ENCODE measurements at regions of chr10 and their contacts with region 1.

Region 1: DNA sequence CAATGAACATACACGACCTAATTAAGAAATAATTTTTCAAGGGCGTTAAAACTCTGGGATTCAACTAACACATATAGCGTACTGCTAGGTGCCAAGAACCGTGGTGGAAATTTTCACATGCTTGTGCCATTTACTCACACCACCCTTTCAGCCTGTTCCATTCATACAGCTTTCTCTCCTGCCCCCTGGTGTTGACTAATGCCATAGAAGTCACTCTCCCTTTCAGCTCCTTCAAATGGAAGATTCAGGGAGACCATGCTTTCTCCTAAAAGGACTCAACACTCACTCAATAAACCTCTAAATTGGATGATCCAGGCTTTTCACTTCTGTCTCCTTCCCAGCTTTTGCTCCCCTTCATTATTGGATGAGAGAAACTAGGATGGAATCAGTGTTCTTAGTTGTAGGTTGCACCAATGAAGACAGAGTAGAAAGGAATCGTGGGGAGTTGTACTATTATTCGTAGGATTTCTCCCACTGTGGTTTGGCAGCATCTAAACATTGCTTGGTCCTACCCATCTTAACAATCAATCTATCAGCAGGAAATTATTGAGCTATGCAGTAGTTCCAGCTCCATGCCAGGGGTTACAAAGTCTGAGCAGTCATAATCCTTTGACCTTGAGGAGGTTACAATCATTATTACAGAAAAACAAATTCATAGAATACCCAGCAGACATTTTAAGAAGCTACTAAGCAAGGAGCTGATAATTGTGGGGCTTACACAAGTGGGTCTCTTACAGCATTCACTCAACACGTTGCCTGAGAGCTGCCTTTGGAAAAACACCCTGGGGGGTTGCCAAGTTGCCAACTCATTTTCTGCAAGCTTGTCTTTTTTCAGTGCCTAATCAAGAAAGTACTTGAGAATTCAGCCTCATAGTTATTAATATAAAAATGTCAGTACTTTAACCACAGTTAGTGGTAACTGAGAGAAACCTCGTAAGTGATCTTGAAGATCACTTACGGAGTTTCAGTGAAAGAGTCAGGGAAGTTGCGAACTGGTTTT is 2.8 kb upstream of the PPP1R3C start:
- H3K4me3 ChIP-seq: no peak overlapping the region
- H3K27ac ChIP-seq: no peak overlapping the region
- H3K4me1 ChIP-seq: no peaks in the 10 kb centered on the region
- CTCF ChIP-seq: peak; percentile 66; the same call in 1 of the 2 replicates

Region 2: GRCh38 chr10:91298224-91298871 is 337.4 kb before region 1 on chr10:
- CTCF ChIA-PET with region 1: interaction called, 25 read pairs
- POLR2A ChIA-PET with region 1: no interaction called
- H3K4me3 ChIP-seq: peak overlapping the region; percentile 12; the same call in 1 of the 2 replicates
- H3K27ac ChIP-seq: no peak overlapping the region
- H3K4me1 ChIP-seq: no peaks in the 10 kb centered on the region; the same call in 1 of the 2 replicates
- CTCF ChIP-seq: peak; percentile 92

Region 3: DNA sequence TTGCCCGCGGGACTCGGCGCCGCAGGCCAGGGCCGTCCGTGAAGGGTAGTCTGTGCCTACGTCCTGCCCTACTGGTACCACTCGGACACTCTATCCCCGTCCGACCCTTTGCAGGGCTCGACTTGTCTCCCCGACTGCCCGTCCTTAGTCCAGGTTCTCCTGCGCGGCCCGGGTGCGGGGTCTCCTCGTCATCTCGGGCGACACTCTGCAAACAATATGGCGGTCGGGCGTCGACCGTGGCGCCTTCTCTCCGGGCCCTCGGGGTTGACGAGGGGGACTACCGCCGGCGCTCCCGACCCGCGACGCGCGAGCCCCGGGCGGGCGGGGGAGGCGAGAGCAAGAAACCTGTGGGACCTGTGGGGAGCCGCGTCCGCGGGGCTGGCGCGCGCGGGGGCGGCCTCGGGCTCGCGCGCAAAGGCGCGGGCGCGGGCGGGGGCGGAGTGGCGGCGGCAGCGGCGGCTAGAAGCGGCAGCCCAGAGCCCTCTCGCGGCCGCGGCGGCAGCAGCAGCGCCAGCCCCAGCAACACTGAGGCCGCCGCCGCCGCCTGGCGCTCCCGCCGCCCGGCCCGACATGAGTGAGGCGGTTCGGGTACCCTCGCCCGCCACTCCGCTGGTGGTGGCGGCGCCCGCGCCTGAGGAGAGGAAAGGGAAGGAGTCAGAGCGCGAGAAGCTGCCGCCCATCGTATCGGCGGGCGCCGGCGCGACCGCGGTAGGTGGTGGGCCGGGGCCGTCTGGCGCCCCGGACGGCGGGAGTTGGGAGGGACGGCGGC is 225.6 kb before region 1 on chr10 and contains the start of gene HECTD2:
- CTCF ChIA-PET with region 1: interaction called, 10 read pairs
- POLR2A ChIA-PET with region 1: no interaction called
- H3K4me3 ChIP-seq: peak within 1 kb of the TSS; percentile 87
- H3K27ac ChIP-seq: peak within 1 kb of the TSS; percentile 99
- H3K4me1 ChIP-seq: peaks cover 18% of the 10 kb centered on the region
- CTCF ChIP-seq: no peak

Region 4: GRCh38 chr10:91493313-91493712 is 142.4 kb before region 1 on chr10:
- CTCF ChIA-PET with region 1: interaction called, 44 read pairs
- POLR2A ChIA-PET with region 1: no interaction called
- H3K4me3 ChIP-seq: no peak overlapping the region
- H3K27ac ChIP-seq: no peak overlapping the region
- H3K4me1 ChIP-seq: no peaks in the 10 kb centered on the region
- CTCF ChIP-seq: no peak

Region 5: DNA sequence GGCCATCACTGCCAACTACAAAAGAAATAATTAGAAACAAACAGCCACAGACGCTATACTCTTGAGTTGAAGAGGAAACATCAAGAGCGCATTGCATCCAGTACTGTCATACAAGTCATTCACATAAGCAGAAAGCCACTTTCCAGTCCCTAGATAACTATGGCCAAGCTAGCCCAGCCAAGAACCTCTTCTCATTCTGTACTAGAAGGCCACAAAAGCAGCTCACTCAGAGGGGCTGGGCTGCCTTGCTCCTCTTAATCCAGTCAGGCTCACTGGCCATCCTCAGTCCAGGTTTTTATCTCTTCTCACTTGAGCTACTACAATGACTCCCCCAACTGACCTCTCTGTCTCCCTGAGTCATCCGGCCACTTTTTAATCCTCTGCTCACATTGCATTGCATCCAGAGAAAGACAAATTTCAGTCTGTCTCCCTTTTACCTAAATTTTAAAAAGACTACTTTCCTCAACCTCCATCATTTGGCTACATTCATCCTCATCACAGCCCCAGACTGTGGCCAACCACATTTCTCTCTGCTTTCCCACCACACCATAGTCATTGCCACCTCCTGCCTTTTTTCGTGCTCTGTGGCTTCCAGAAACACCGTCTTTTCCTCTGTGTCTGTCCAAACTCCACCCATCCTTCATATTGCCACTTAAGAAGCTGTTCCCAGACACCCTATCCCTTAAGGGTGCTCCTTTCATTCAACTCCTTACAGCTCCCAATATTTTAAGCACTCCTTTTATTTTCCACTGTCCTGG is 27.9 kb before region 1 on chr10:
- CTCF ChIA-PET with region 1: interaction called, 14 read pairs
- POLR2A ChIA-PET with region 1: interaction called, 3 read pairs
- H3K4me3 ChIP-seq: no peak overlapping the region
- H3K27ac ChIP-seq: peak overlapping the region; percentile 43; the same call in 1 of the 2 replicates
- H3K4me1 ChIP-seq: peaks cover 5% of the 10 kb centered on the region
- CTCF ChIP-seq: no peak

Region 6: DNA sequence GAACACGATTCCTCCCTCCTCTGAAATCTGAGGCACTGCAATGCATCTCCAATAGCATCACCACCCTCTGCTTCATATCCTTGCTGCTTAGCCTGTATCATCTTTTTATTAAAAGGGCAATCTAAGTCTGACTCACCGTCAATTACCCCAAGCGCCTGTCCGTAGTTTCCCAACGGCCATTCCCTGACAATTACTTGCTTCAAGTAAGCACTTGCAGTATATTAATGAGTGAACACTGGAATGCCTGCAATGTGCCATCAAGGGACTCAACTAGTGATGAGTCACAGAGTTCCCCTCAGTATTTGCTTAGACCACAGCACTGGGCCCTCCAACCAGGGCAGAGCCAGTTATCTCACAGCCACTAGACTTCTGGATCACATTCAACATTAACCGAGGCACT is 16.7 kb after region 1 on chr10:
- CTCF ChIA-PET with region 1: interaction called, 10 read pairs
- POLR2A ChIA-PET with region 1: no interaction called
- H3K4me3 ChIP-seq: no peak overlapping the region
- H3K27ac ChIP-seq: no peak overlapping the region
- H3K4me1 ChIP-seq: peaks cover 3% of the 10 kb centered on the region; the same call in 1 of the 2 replicates
- CTCF ChIP-seq: no peak

Region 7: GRCh38 chr10:91907033-91907594 is 271.4 kb after region 1 on chr10:
- CTCF ChIA-PET with region 1: no interaction called
- POLR2A ChIA-PET with region 1: no interaction called
- H3K4me3 ChIP-seq: no peak overlapping the region
- H3K27ac ChIP-seq: no peak overlapping the region
- H3K4me1 ChIP-seq: peaks cover 4% of the 10 kb centered on the region
- CTCF ChIP-seq: no peak